ENCODE measurements at regions of chr6 and their contacts with region 1.

Region 1: DNA sequence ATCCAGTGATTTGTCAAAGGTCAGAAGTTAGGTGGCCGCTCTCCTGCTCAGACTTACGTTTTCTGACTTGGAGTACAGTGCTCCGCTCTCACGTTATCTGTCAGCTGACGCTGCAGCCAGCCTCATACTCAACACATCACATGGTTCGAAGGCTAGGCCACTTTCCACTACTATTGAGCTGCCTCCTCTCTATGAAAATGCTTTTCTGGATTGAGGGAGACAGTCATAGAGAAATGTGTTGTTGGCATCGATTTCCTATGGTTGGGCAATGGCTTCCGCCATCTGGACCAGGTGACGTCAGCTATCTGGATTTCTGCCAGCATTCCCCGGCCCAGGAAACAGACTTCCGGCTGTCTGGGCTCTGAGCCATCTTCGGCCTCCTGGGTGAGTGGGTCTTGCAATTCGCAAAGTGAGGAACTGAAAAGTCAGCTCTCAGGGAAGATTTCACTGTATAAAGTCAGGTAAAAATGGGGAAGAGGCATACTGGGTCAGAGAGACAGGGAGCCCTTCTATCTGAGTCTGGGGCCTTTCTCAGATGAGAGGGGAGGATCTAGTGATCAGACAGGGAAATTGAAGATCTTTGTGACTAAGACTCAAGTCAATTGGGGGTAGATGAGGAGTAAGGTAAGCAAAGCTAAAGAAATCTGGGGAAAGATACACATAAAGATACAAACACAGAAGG is 37.5 kb upstream of the IER3 start:
- H3K4me3 Mint-ChIP-seq: peak overlapping the region; percentile 5
- H3K27ac Mint-ChIP-seq: peak overlapping the region; percentile 79
- H3K4me1 Mint-ChIP-seq: peaks cover 80% of the 10 kb centered on the region
- H3K27me3 Mint-ChIP-seq: no peaks in the 10 kb centered on the region

Region 2: DNA sequence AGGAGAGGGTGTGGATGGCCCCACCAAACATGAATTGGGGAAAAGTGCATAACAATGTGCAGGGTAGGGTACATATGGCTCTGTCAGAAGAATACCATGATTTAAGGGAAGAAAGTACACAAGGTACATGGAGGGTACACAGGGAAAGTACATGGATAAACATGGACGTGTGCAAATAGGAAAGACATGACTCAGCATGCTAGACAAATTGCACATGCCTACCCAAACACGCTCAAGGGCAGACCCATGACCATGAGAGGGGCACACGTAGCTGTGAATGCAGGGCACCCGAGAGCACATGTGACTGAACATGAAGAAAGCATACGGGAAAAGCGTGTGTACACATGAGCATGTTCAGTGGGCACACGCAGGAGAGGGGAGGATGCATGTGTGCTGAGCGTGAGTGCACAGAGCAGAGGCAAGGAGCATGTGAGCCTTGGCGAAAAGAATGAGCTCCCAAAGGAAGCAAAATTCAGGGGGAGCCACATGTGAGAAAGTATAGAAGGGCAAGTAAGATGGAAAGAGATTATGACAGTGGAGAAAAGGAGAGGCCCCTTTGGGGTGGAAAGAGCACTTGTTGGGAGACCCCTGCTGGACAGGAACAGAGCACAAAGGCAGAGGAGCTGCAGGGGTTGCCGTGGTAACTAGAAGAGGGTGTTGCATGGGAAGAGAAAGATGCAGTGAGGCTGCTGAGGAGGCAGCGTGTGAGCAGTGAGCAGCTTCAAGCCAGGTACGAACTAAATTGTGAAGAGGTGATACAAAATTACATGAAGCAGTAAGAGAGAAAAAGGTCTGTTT is 1179.1 kb before region 1 on chr6:
- intact Hi-C with region 1: no loop called
- H3K4me3 Mint-ChIP-seq: no peak overlapping the region
- H3K27ac Mint-ChIP-seq: no peak overlapping the region
- H3K4me1 Mint-ChIP-seq: no peaks in the 10 kb centered on the region
- H3K27me3 Mint-ChIP-seq: no peaks in the 10 kb centered on the region

Region 3: DNA sequence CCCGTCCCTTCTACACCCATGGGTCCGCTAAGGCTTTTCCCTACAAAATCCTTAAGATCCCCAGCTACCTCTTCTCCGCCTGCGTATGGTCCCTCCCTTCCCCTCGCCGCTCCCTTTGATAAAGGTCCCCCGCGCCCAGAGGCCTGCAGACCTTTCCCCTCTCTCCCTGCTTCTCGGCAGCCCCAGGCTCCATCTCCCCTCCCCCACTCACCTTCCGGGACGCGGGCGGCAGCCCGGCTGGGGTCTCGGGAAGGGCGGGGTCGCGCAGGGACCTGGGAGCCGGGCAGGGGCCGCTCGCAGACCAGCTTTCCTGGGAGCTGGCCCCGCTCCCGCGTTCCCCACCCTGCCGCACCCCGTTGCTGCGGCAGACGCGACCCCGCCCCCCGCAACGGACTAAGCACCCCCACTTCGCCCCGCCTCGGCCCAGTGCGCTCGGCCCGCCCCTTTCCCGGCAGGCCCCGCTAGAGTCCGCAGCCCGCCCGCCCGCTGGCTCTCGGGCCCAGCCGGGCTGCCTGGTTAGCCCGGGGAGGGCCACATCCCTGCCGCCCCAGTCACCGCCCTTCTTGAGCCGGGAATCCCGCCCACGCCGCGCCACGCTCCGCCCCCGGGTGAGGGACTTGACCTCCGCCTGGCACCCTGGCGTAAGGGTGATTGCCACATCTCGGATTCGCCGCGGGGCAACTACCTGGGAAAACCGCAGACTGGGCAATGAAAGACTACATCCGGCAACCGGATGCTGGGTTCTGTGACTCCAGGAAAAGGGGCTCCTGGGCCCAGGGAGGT is 39.4 kb before region 1 on chr6 and contains the start of gene FLOT1:
- intact Hi-C with region 1: loop called (anchors 2 kb)
- H3K4me3 Mint-ChIP-seq: peak within 1 kb of the TSS; percentile 98
- H3K27ac Mint-ChIP-seq: peak within 1 kb of the TSS; percentile 99
- H3K4me1 Mint-ChIP-seq: peaks cover 67% of the 10 kb centered on the region
- H3K27me3 Mint-ChIP-seq: peaks cover 4% of the 10 kb centered on the region

Region 4: DNA sequence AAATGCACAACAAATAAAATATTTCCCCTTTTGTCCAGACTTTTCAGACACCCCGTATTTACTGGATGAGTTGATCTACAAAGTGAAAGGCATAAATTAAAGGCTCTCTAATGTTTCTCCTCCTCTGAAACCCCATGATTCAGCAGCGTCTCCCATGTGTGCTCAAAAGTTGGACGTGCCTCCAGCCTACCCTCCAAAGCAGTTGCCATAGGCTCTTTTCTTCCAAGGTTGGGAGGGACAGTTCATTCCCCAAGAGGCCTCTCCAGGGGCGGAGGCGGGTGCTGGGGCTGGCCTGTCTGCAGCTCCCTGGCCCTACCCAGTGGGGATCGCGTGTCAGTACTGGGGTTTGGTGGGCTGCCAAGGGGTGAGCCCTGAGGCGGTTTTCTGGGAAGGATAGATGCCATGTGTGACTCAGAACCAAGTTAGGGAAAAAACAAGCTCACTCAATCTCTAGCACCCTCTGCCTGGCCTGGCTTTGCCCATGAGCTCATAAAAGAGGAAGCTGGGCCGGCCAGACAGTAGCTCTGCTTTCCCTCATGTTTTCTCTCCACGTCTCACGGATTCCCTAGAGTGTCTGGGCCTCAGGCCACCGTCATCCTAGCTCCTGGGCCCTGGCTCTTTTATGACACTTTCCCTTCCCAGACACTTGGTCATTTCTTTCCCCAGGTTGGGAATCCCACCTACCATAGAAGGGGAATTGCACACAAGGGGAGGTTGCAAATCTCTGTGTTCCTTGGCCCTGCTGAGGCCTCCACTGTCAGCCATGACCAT is 29.5 kb before region 1 on chr6:
- intact Hi-C with region 1: loop called (anchors 2 kb)
- H3K4me3 Mint-ChIP-seq: no peak overlapping the region
- H3K27ac Mint-ChIP-seq: peak overlapping the region; percentile 92
- H3K4me1 Mint-ChIP-seq: peaks cover 73% of the 10 kb centered on the region
- H3K27me3 Mint-ChIP-seq: peaks cover 2% of the 10 kb centered on the region

Region 5: GRCh38 chr6:30814136-30815040 is 32.5 kb after region 1 on chr6:
- intact Hi-C with region 1: loop called (anchors 1 kb)
- H3K4me3 Mint-ChIP-seq: peak overlapping the region; percentile 20
- H3K27ac Mint-ChIP-seq: peak overlapping the region; percentile 87
- H3K4me1 Mint-ChIP-seq: peaks cover 83% of the 10 kb centered on the region
- H3K27me3 Mint-ChIP-seq: no peaks in the 10 kb centered on the region

Region 6: DNA sequence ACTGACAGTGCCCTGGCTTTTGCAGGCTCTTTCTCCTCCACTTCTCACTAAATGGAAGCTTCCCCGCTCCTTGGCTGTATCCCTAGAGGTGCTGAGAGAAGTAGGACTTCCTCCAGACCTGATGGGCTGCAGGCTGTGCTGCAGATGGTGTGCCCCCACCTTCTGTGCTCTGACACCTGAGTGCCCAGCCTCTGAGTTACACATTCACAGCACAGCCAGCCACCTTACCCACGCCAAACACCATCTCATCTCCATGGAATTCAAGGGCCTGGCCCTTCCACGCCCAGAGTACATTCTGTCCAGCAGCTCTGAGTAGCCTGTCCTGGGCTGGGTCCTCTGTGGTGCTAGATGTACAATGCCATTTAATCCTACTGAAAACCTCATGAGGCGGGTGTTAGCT is 144.8 kb after region 1 on chr6:
- intact Hi-C with region 1: no loop called
- H3K4me3 Mint-ChIP-seq: no peak overlapping the region
- H3K27ac Mint-ChIP-seq: no peak overlapping the region
- H3K4me1 Mint-ChIP-seq: peaks cover 9% of the 10 kb centered on the region
- H3K27me3 Mint-ChIP-seq: peaks cover 3% of the 10 kb centered on the region